WTC11 (cell line): ENCODE measurements at regions of chr20 and their contacts with region 1.

Region 1: GRCh38 chr20:45373353-45374100 is 4.6 kb downstream of the TP53TG5 start:
- DNase-seq: peak; percentile 94
- ATAC-seq: peak; percentile 89
- H3K4me3 Mint-ChIP-seq: peak overlapping the region; percentile 73
- H3K27ac Mint-ChIP-seq: no peak overlapping the region
- H3K4me1 Mint-ChIP-seq: peaks cover 13% of the 10 kb centered on the region
- H3K27me3 Mint-ChIP-seq: peaks cover 6% of the 10 kb centered on the region
- CTCF ChIP-seq: peak; percentile 92

Region 2: DNA sequence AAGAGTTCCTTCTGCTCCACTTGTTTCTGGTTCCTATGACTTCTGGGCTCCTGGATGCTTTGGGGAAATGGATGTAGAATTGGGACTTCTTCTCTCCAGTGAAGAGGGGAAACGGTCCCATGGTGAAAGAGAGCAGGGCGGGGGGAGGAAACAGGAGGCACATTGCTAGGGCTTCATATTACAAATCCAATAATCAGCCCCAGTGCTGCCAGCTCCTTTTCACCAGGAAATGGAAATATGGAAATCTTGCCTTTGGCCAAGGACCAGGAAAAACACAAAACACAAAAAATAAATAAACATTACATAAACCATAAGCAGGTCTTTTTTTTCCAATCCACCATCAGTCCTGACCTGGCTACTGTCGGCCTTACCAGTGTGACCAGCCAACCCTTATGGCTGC is 197.0 kb before region 1 on chr20:
- CTCF ChIA-PET with region 1: no interaction called
- POLR2A ChIA-PET with region 1: no interaction called
- DNase-seq: no peak
- ATAC-seq: no peak
- H3K4me3 Mint-ChIP-seq: no peak overlapping the region
- H3K27ac Mint-ChIP-seq: no peak overlapping the region
- H3K4me1 Mint-ChIP-seq: peaks cover 7% of the 10 kb centered on the region; the same call in 1 of the 2 replicates
- H3K27me3 Mint-ChIP-seq: peaks cover 8% of the 10 kb centered on the region
- CTCF ChIP-seq: no peak

Region 3: GRCh38 chr20:45206746-45207145 is 166.8 kb before region 1 on chr20 and contains the start of gene SEMG1:
- CTCF ChIA-PET with region 1: no interaction called
- POLR2A ChIA-PET with region 1: no interaction called
- DNase-seq: no peak
- ATAC-seq: no peak
- H3K4me3 Mint-ChIP-seq: no peak within 1 kb of the TSS
- H3K27ac Mint-ChIP-seq: no peak within 1 kb of the TSS
- H3K4me1 Mint-ChIP-seq: peaks cover 48% of the 10 kb centered on the region
- H3K27me3 Mint-ChIP-seq: peaks cover 14% of the 10 kb centered on the region
- CTCF ChIP-seq: no peak
- total RNA-seq, gene SEMG1: 2.0 to 2.9 TPM (median 2.1 TPM) in 3 replicates

Region 4: DNA sequence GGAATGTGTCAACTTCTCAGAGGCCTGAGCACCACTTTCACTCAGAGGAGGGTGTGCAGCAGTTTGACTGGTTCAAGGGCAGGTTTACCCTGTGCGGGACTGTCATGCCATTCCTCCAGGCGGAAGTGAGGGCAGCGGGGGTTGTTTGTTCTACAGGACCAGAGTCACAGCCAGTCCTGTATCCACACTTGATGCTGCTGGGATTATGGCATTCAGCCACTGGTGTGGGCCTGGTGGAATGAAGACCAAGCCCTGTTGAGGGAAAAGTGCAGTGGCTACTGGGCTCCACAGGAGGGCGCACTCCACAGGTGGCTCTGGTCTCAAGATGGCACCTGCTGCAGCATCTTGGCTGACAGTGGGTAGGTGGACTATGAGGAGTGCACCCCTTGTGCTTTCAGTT is 137.5 kb before region 1 on chr20:
- CTCF ChIA-PET with region 1: no interaction called
- POLR2A ChIA-PET with region 1: no interaction called
- DNase-seq: peak; percentile 75
- ATAC-seq: peak; percentile 97
- H3K4me3 Mint-ChIP-seq: no peak overlapping the region
- H3K27ac Mint-ChIP-seq: no peak overlapping the region
- H3K4me1 Mint-ChIP-seq: no peaks in the 10 kb centered on the region
- H3K27me3 Mint-ChIP-seq: peaks cover 14% of the 10 kb centered on the region
- CTCF ChIP-seq: peak; percentile 90

Region 5: DNA sequence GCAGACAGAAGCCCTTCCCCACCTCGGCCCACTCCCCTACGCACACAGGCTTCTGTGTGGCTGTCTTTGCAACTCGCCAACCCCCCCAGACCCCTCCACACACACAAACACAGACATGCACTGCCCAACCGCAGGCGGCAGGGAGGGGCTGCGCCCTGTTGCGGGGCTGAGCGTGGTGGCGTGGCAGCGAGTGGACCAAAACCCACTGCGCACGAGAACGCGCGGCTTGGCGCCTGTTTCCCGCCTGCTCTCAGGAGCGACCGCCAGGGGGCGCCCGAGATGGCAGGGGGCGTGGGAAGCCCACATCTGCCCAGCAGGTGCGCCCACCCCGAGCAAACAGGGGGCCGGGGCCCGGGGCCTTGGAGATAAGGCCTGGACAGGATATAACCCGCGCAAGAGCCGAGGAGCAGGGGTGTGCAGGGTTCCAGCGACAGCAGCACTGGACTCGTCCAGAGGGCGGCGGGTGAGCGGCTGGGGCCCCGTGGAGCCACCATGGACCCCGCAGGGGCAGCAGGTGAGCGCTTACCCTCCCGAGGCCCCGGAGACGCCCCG is 67.0 kb before region 1 on chr20 and contains the start of gene RBPJL:
- CTCF ChIA-PET with region 1: interaction called, 32 read pairs
- POLR2A ChIA-PET with region 1: no interaction called
- DNase-seq: peak; percentile 79
- ATAC-seq: peak; percentile 8; the same call in 1 of the 2 replicates
- H3K4me3 Mint-ChIP-seq: 0 out of 2 replicates have a peak within 1 kb of the TSS, but pooled peaks have one; percentile 22
- H3K27ac Mint-ChIP-seq: no peak within 1 kb of the TSS
- H3K4me1 Mint-ChIP-seq: peaks cover 22% of the 10 kb centered on the region
- H3K27me3 Mint-ChIP-seq: peaks cover 30% of the 10 kb centered on the region
- CTCF ChIP-seq: peak; percentile 99
- total RNA-seq, gene RBPJL: 0.78 to 0.85 TPM (median 0.80 TPM) in 3 replicates

Region 6: GRCh38 chr20:45341939-45342859 is 31.3 kb before region 1 on chr20:
- CTCF ChIA-PET with region 1: interaction called, 23 read pairs
- POLR2A ChIA-PET with region 1: interaction called, 3 read pairs
- DNase-seq: peak; percentile 82
- ATAC-seq: peak; percentile 72
- H3K4me3 Mint-ChIP-seq: peak overlapping the region; percentile 65
- H3K27ac Mint-ChIP-seq: peak overlapping the region; percentile 98
- H3K4me1 Mint-ChIP-seq: peaks cover 99% of the 10 kb centered on the region
- H3K27me3 Mint-ChIP-seq: no peaks in the 10 kb centered on the region
- CTCF ChIP-seq: no peak

Region 7: GRCh38 chr20:45387274-45387673 is 13.7 kb after region 1 on chr20:
- CTCF ChIA-PET with region 1: interaction called, 25 read pairs
- POLR2A ChIA-PET with region 1: no interaction called
- DNase-seq: no peak
- ATAC-seq: no peak
- H3K4me3 Mint-ChIP-seq: no peak overlapping the region
- H3K27ac Mint-ChIP-seq: no peak overlapping the region
- H3K4me1 Mint-ChIP-seq: no peaks in the 10 kb centered on the region
- H3K27me3 Mint-ChIP-seq: no peaks in the 10 kb centered on the region; the same call in none of the 2 replicates
- CTCF ChIP-seq: no peak

Region 8: DNA sequence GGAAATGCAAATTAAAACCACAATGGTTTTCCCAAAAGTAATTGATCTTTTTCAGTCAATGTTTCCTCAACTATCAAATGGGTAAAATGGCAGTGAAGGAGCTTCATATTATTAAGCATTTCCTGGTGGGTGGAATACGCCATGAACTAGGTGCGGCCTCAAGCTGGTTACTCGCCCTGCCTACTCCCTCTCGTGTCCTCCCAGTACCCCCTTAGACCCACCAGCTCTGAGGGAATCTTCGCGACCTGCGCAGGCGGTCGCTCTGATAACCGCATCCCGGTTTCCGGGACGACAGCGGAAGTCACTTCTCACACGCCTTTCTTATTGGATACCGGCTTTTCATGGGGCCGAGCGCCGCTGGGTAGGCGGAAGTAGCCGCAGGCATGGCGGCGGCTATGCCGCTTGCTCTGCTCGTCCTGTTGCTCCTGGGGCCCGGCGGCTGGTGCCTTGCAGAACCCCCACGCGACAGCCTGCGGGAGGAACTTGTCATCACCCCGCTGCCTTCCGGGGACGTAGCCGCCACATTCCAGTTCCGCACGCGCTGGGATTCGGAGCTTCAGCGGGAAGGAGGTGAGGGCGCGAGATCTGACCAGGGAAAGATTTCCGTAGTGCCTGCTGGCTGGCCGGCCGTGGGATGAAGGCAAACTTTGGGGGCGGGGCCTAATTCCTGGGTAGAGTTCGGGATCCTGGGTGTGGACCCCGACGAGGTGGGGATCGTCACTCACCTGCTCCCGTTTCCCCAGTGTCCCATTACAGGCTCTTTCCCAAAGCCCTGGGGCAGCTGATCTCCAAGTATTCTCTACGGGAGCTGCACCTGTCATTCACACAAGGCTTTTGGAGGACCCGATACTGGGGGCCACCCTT is 42.5 kb after region 1 on chr20 and contains the start of gene PIGT:
- CTCF ChIA-PET with region 1: interaction called, 30 read pairs
- POLR2A ChIA-PET with region 1: interaction called, 6 read pairs
- DNase-seq: peak; percentile 82
- ATAC-seq: peak; percentile 97
- H3K4me3 Mint-ChIP-seq: peak within 1 kb of the TSS; percentile 91
- H3K27ac Mint-ChIP-seq: peak within 1 kb of the TSS; percentile 71
- H3K4me1 Mint-ChIP-seq: peaks cover 10% of the 10 kb centered on the region
- H3K27me3 Mint-ChIP-seq: no peaks in the 10 kb centered on the region
- CTCF ChIP-seq: no peak
- total RNA-seq, gene PIGT: 63.7 to 67.7 TPM (median 67.7 TPM) in 3 replicates

Region 9: DNA sequence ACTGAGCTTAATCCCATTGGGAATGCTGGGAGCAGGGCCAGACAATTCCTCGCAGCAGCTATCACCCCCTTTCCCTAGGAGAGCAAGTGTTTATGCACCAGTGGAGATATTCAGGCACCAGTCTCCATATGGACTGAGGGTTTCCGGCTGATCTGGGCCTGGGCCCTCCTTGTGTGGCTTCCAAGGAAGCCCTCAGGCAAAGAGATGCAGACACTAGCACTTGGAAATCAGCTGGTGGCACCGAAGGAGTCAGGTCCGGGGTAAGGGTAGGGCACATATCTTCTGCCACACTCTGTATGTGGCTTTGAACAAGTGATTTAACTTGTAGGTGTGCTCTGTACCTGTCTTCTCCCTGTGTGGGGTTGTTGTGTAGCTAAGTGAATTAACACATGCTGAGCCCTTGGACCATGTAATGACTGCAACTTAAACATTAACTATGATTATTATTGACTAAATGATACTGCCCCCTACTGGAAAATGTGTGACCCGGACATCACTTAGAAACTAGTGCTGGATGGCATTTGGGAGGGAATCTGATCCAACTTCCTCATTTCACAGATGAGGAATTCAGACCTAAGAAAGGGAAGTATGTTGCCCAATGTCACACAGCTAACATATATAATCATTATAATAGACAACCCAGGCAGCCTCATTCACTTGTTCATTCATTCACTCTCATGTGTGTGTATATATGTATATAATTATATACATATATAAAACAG is 76.7 kb after region 1 on chr20:
- CTCF ChIA-PET with region 1: interaction called, 67 read pairs
- POLR2A ChIA-PET with region 1: no interaction called
- DNase-seq: no peak
- ATAC-seq: peak; percentile 59
- H3K4me3 Mint-ChIP-seq: no peak overlapping the region
- H3K27ac Mint-ChIP-seq: no peak overlapping the region
- H3K4me1 Mint-ChIP-seq: peaks cover 3% of the 10 kb centered on the region; the same call in 1 of the 2 replicates
- H3K27me3 Mint-ChIP-seq: peaks cover 3% of the 10 kb centered on the region; the same call in 1 of the 2 replicates
- CTCF ChIP-seq: peak; percentile 70

Region 10: DNA sequence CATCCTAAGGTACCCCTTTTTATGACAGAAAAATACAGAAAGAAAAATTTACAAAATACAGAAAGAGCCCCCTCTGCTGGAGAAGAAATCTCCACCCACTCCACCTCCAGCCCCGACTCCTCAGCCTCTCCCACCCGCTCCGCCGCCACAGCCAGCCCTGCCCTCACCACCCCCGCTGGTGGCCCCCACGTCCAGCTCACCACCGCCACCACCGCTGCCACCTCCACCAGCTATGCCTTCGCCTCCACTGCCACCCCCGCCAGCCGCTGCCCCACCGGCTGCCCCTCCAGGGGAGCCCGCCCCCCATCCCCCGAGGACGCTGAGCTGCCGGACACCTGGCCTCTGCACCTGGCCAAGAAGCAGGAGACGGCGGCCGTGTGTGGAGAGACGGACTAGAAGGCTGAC is 113.7 kb after region 1 on chr20:
- CTCF ChIA-PET with region 1: interaction called, 21 read pairs
- POLR2A ChIA-PET with region 1: interaction called, 4 read pairs
- DNase-seq: peak; percentile 58
- ATAC-seq: peak; percentile 82
- H3K4me3 Mint-ChIP-seq: peak overlapping the region; percentile 63
- H3K27ac Mint-ChIP-seq: no peak overlapping the region
- H3K4me1 Mint-ChIP-seq: peaks cover 34% of the 10 kb centered on the region
- H3K27me3 Mint-ChIP-seq: no peaks in the 10 kb centered on the region
- CTCF ChIP-seq: peak; percentile 55

Region 11: GRCh38 chr20:45621593-45621992 is 248.1 kb after region 1 on chr20:
- CTCF ChIA-PET with region 1: no interaction called
- POLR2A ChIA-PET with region 1: no interaction called
- DNase-seq: no peak
- ATAC-seq: no peak
- H3K4me3 Mint-ChIP-seq: no peak overlapping the region
- H3K27ac Mint-ChIP-seq: no peak overlapping the region
- H3K4me1 Mint-ChIP-seq: no peaks in the 10 kb centered on the region
- H3K27me3 Mint-ChIP-seq: no peaks in the 10 kb centered on the region; the same call in 1 of the 2 replicates
- CTCF ChIP-seq: no peak